ENCODE measurements at regions of chrX and their contacts with region 1.

Region 1: GRCh38 chrX:39688576-39689375 is 409.0 kb downstream of the BCOR start:
- DNase-seq: peak; percentile 19
- H3K4me3 Mint-ChIP-seq: no peak overlapping the region
- H3K27ac Mint-ChIP-seq: no peak overlapping the region
- H3K4me1 Mint-ChIP-seq: peaks cover 1% of the 10 kb centered on the region
- H3K27me3 Mint-ChIP-seq: peaks cover 8% of the 10 kb centered on the region

Region 2: GRCh38 chrX:39491548-39492297 is 197.1 kb before region 1 on chrX:
- CTCF ChIA-PET with region 1: no interaction called
- POLR2A ChIA-PET with region 1: no interaction called
- intact Hi-C with region 1: loop called (anchors 5 kb)
- DNase-seq: peak; percentile 77
- H3K4me3 Mint-ChIP-seq: peak overlapping the region; percentile 34
- H3K27ac Mint-ChIP-seq: peak overlapping the region; percentile 83
- H3K4me1 Mint-ChIP-seq: peaks cover 50% of the 10 kb centered on the region
- H3K27me3 Mint-ChIP-seq: no peaks in the 10 kb centered on the region

Region 3: DNA sequence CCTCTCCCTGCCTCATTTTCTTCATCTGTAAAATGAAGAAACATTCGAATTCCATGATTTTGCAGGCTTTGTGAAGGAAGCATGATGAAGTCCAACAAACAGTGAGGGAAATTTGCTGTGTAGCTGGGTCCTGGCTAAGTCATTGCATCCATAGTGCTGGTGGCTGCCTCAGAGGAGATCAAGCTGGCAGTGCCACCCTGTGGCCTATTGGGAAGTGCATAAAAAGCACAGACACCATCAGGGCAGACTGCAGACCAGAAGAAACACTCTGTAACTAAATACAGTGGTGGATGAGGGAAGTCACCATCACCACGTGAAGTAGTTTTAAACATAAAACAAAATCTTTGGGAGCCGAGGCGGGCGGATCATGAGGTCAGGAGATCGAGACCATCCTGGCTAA is 1604.5 kb after region 1 on chrX:
- CTCF ChIA-PET with region 1: no interaction called
- POLR2A ChIA-PET with region 1: no interaction called
- intact Hi-C with region 1: no loop called
- DNase-seq: peak; percentile 28
- H3K4me3 Mint-ChIP-seq: no peak overlapping the region
- H3K27ac Mint-ChIP-seq: no peak overlapping the region
- H3K4me1 Mint-ChIP-seq: no peaks in the 10 kb centered on the region
- H3K27me3 Mint-ChIP-seq: no peaks in the 10 kb centered on the region